ENCODE measurements at regions of chr5 and their contacts with region 1.

Region 1: DNA sequence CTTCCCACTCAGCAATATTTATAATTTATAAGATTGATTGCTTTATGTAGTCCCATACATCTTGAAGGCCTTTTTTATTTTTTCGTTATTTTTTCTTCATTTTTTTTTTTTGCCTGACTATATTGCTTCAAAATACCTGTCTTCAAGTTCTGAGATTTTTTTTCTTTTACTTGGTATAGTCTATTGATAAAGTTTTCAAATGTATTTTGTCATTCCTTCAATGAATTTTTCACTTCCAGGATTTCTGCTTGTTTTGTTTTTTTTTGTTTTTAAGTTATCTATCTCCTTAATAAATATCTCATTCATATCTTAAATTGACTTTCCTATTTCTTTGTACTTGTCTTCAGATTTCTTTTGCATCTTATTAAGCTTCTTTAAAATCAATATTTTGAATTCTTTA is 905.6 kb upstream of the CDH6 start:
- DNase-seq: no peak
- H3K4me3 ChIP-seq: no peak overlapping the region
- H3K27ac ChIP-seq: no peak overlapping the region
- H3K4me1 ChIP-seq: no peaks in the 10 kb centered on the region
- H3K27me3 ChIP-seq: no peaks in the 10 kb centered on the region
- CTCF ChIP-seq: no peak
- EP300 ChIP-seq: no peak
- POLR2A ChIP-seq: no peak

Region 2: GRCh38 chr5:30267026-30267425 is 20.9 kb before region 1 on chr5:
- in situ Hi-C with region 1: no loop called
- intact Hi-C with region 1: loop called (anchors 1 kb)
- DNase-seq: no peak
- H3K4me3 ChIP-seq: no peak overlapping the region
- H3K27ac ChIP-seq: no peak overlapping the region
- H3K4me1 ChIP-seq: no peaks in the 10 kb centered on the region
- H3K27me3 ChIP-seq: no peaks in the 10 kb centered on the region
- CTCF ChIP-seq: no peak
- EP300 ChIP-seq: no peak
- POLR2A ChIP-seq: no peak